Naive thymus-derived CD4-positive, alpha-beta T cell (primary cell): ENCODE measurements at regions of chr22 and their contacts with region 1.

Region 1: DNA sequence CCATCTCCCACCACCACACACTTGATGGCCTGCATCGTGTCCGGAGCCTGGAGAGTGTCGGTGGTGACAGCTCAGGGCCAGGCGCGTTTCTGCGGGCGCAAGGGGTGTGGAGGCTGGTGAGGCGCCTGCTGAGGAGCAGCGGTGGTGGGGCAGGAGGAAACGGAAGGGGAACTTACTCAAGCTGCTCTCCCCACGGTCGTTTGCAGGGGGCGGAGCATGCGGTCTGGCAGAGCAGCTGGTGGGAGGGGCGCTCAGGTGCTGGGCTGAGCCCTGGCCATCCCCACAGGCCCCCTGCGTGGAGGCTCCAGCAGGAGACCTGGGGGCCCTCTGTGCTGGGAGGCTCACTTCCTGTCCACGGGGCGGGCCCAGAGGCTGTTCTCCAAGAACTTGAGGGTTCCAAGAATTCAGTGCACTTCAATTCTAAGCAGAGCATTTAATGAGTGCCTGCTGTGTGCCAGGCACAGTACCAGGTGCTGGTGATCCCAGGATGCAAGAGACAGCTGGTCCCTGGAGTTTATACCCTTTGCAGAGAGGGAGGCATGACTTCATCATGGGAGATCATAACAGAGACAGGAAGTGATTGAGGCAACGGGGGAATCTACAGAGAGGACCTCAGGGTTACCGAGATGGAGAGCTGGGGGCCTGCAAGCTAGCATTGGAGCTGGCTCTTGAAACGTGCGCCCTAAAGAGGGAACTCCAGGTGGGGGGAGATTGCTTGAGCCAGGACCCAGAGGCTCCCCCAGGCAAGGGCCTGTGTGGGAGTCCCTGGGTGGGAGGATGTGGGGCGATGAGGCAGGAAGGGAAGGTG is at the start of gene RAC2:
- DNase-seq: peak; percentile 62 to 89 (median 76)
- ATAC-seq: peak; percentile 76
- H3K4me3 ChIP-seq: peak within 1 kb of the TSS; percentile 90
- H3K4me3 Mint-ChIP-seq: peak within 1 kb of the TSS; percentile 86 to 99 (median 98)
- H3K27ac ChIP-seq: peak within 1 kb of the TSS; percentile 86
- H3K27ac Mint-ChIP-seq: peak within 1 kb of the TSS; percentile 89 to 99 (median 97)
- H3K4me1 ChIP-seq: peaks cover 42 to 43% of the 10 kb centered on the region in 2 donors
- H3K4me1 Mint-ChIP-seq: peaks cover 33 to 54% (median 50%) of the 10 kb centered on the region in 7 donors
- H3K27me3 ChIP-seq: no peaks in the 10 kb centered on the region
- H3K27me3 Mint-ChIP-seq: no peaks in the 10 kb centered on the region
- total RNA-seq, gene RAC2: 263 to 886 (median 301) TPM

Region 2: DNA sequence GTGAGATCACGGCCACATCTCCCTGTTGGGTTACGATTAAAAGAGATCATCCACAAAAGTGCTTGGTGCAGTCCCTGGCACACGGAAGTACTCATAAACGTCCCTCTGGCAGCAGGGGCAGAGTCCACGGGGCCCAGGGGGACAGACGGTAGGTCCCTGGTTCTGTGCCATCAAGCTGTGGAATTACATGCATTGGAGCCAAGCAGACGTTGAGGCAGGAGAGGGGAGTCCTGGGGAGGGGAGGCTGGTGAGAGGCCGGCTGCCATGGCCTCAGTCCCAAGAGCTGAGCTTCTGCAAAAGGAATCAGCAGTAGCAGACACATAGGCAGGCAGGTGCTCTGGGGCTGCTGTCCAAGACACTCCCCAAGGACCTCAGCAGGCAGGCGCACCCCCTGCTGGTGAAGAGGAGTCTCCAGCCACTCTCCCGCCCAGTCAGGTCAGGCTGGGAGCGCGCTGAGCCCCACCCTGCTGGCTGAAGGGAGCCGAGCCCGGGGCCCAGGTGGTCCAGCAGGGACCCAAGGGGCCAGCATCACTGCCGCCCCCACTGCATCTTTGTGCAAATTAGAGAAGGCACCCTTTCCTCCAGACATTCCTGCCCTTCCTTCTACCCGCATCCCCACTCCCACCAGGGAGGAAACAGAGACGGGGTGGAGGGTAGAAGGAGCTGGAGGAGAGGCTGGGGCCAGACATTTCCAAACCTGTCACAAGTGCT is 200.3 kb before region 1 on chr22:
- CTCF ChIA-PET with region 1: no interaction called
- POLR2A ChIA-PET with region 1: no interaction called
- intact Hi-C with region 1: no loop called
- DNase-seq: peak in 2 of 9 donors; percentile 16 to 64
- ATAC-seq: peak; percentile 74
- H3K4me3 ChIP-seq: no peak overlapping the region
- H3K4me3 Mint-ChIP-seq: no peak overlapping the region
- H3K27ac ChIP-seq: no peak overlapping the region
- H3K27ac Mint-ChIP-seq: no peak overlapping the region
- H3K4me1 ChIP-seq: no peaks in the 10 kb centered on the region
- H3K4me1 Mint-ChIP-seq: peaks cover 0 to 25% (median 0%) of the 10 kb centered on the region in 7 donors
- H3K27me3 ChIP-seq: no peaks in the 10 kb centered on the region
- H3K27me3 Mint-ChIP-seq: peaks cover 0 to 9% (median 0%) of the 10 kb centered on the region in 5 donors

Region 3: GRCh38 chr22:37121887-37122591 is 122.3 kb before region 1 on chr22:
- CTCF ChIA-PET with region 1: interaction called, 4 read pairs
- POLR2A ChIA-PET with region 1: interaction called, 13 read pairs
- intact Hi-C with region 1: loop called in 1 of 2 experiments (anchors 1 kb)
- DNase-seq: peak; percentile 62 to 98 (median 94)
- ATAC-seq: peak; percentile 99
- H3K4me3 ChIP-seq: peak overlapping the region; percentile 30
- H3K4me3 Mint-ChIP-seq: peak overlapping the region; percentile 69 to 91 (median 79)
- H3K27ac ChIP-seq: peak overlapping the region; percentile 96
- H3K27ac Mint-ChIP-seq: peak overlapping the region; percentile 95 to 100 (median 98)
- H3K4me1 ChIP-seq: peaks cover 21 to 30% of the 10 kb centered on the region in 2 donors
- H3K4me1 Mint-ChIP-seq: peaks cover 19 to 86% (median 65%) of the 10 kb centered on the region in 7 donors
- H3K27me3 ChIP-seq: no peaks in the 10 kb centered on the region
- H3K27me3 Mint-ChIP-seq: peaks cover 0 to 2% (median 0%) of the 10 kb centered on the region in 5 donors

Region 4: GRCh38 chr22:37154925-37155712 is 89.2 kb before region 1 on chr22:
- CTCF ChIA-PET with region 1: no interaction called
- POLR2A ChIA-PET with region 1: no interaction called
- intact Hi-C with region 1: no loop called
- DNase-seq: no peak
- ATAC-seq: no peak
- H3K4me3 ChIP-seq: no peak overlapping the region
- H3K4me3 Mint-ChIP-seq: no peak overlapping the region
- H3K27ac ChIP-seq: no peak overlapping the region
- H3K27ac Mint-ChIP-seq: peak overlapping the region in 4 of 9 donors; percentile 15 to 74 (median 44)
- H3K4me1 ChIP-seq: peaks cover 2 to 8% of the 10 kb centered on the region in 2 donors
- H3K4me1 Mint-ChIP-seq: peaks cover 9 to 68% (median 23%) of the 10 kb centered on the region in 7 donors
- H3K27me3 ChIP-seq: no peaks in the 10 kb centered on the region
- H3K27me3 Mint-ChIP-seq: no peaks in the 10 kb centered on the region

Region 5: GRCh38 chr22:37210041-37210803 is 34.1 kb before region 1 on chr22:
- CTCF ChIA-PET with region 1: interaction called, 37 read pairs
- POLR2A ChIA-PET with region 1: interaction called, 335 read pairs
- intact Hi-C with region 1: loop called in 1 of 2 experiments (anchors 1 kb)
- DNase-seq: no peak
- ATAC-seq: no peak
- H3K4me3 ChIP-seq: no peak overlapping the region
- H3K4me3 Mint-ChIP-seq: no peak overlapping the region
- H3K27ac ChIP-seq: peak overlapping the region; percentile 11
- H3K27ac Mint-ChIP-seq: peak overlapping the region; percentile 19 to 94 (median 80)
- H3K4me1 ChIP-seq: peaks cover 0 to 24% of the 10 kb centered on the region in 2 donors
- H3K4me1 Mint-ChIP-seq: peaks cover 22 to 85% (median 75%) of the 10 kb centered on the region in 7 donors
- H3K27me3 ChIP-seq: no peaks in the 10 kb centered on the region
- H3K27me3 Mint-ChIP-seq: no peaks in the 10 kb centered on the region

Region 6: GRCh38 chr22:37229805-37230672 is 14.3 kb before region 1 on chr22:
- CTCF ChIA-PET with region 1: interaction called, 64 read pairs
- POLR2A ChIA-PET with region 1: interaction called, 335 read pairs
- intact Hi-C with region 1: loop called (anchors 1 kb)
- DNase-seq: peak; percentile 60 to 93 (median 89)
- ATAC-seq: peak; percentile 93
- H3K4me3 ChIP-seq: peak overlapping the region; percentile 54
- H3K4me3 Mint-ChIP-seq: peak overlapping the region; percentile 75 to 99 (median 86)
- H3K27ac ChIP-seq: peak overlapping the region; percentile 90
- H3K27ac Mint-ChIP-seq: peak overlapping the region; percentile 96 to 100 (median 99)
- H3K4me1 ChIP-seq: peaks cover 80 to 92% of the 10 kb centered on the region in 2 donors
- H3K4me1 Mint-ChIP-seq: peaks cover 75 to 92% (median 87%) of the 10 kb centered on the region in 7 donors
- H3K27me3 ChIP-seq: no peaks in the 10 kb centered on the region
- H3K27me3 Mint-ChIP-seq: no peaks in the 10 kb centered on the region

Region 7: DNA sequence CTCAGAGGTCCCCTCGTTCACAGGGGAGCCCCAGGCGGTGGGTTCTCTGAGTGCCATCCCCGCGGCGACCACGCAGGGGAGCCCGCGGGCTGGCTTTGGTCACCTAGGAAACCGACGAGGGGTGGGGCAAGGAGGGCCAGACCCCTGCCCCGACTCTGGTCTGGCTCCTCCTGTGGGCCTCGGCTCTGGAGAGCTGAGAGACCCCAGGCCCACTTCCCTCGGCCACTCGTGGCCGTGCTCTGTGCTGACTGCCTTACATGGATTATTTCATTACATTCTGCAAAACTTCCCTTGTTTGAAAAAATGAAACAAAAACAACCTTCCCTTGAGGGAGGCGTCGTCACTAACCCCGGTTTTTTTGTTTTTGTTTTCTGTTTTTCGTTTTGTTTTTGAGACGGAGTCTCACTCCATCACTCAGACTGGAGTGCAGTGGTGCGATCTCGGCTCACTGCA is 22.8 kb after region 1 on chr22:
- CTCF ChIA-PET with region 1: interaction called, 184 read pairs
- POLR2A ChIA-PET with region 1: interaction called, 151 read pairs
- intact Hi-C with region 1: no loop called
- DNase-seq: peak; percentile 58 to 84 (median 73)
- ATAC-seq: peak; percentile 92
- H3K4me3 ChIP-seq: peak overlapping the region; percentile 76
- H3K4me3 Mint-ChIP-seq: peak overlapping the region; percentile 84 to 93 (median 88)
- H3K27ac ChIP-seq: peak overlapping the region; percentile 87
- H3K27ac Mint-ChIP-seq: peak overlapping the region; percentile 91 to 99 (median 95)
- H3K4me1 ChIP-seq: peaks cover 0 to 13% of the 10 kb centered on the region in 2 donors
- H3K4me1 Mint-ChIP-seq: peaks cover 30 to 48% (median 38%) of the 10 kb centered on the region in 7 donors
- H3K27me3 ChIP-seq: no peaks in the 10 kb centered on the region
- H3K27me3 Mint-ChIP-seq: peaks cover 0 to 14% (median 0%) of the 10 kb centered on the region in 5 donors

Region 8: GRCh38 chr22:37309211-37310074 is 65.1 kb after region 1 on chr22:
- CTCF ChIA-PET with region 1: interaction called, 3 read pairs
- POLR2A ChIA-PET with region 1: interaction called, 40 read pairs
- intact Hi-C with region 1: no loop called
- DNase-seq: peak in 8 of 9 donors; percentile 46 to 72 (median 67)
- ATAC-seq: peak; percentile 49
- H3K4me3 ChIP-seq: peak overlapping the region; percentile 34
- H3K4me3 Mint-ChIP-seq: peak overlapping the region; percentile 75 to 94 (median 84)
- H3K27ac ChIP-seq: peak overlapping the region; percentile 84
- H3K27ac Mint-ChIP-seq: peak overlapping the region; percentile 89 to 100 (median 97)
- H3K4me1 ChIP-seq: peaks cover 61 to 72% of the 10 kb centered on the region in 2 donors
- H3K4me1 Mint-ChIP-seq: peaks cover 63 to 87% (median 83%) of the 10 kb centered on the region in 7 donors
- H3K27me3 ChIP-seq: no peaks in the 10 kb centered on the region
- H3K27me3 Mint-ChIP-seq: no peaks in the 10 kb centered on the region

Region 9: GRCh38 chr22:37768273-37768672 is 524.0 kb after region 1 on chr22:
- CTCF ChIA-PET with region 1: no interaction called
- POLR2A ChIA-PET with region 1: no interaction called
- intact Hi-C with region 1: no loop called
- DNase-seq: no peak
- ATAC-seq: no peak
- H3K4me3 ChIP-seq: no peak overlapping the region
- H3K4me3 Mint-ChIP-seq: no peak overlapping the region
- H3K27ac ChIP-seq: no peak overlapping the region
- H3K27ac Mint-ChIP-seq: no peak overlapping the region
- H3K4me1 ChIP-seq: no peaks in the 10 kb centered on the region
- H3K4me1 Mint-ChIP-seq: peaks cover 0 to 4% (median 0%) of the 10 kb centered on the region in 7 donors
- H3K27me3 ChIP-seq: no peaks in the 10 kb centered on the region
- H3K27me3 Mint-ChIP-seq: no peaks in the 10 kb centered on the region